Activated CD4-positive, alpha-beta T cell treated with anti-CD3 and anti-CD28 coated beads for 36 hours (primary cell): ENCODE measurements at regions of chr16 and their contacts with region 1.

Region 1: DNA sequence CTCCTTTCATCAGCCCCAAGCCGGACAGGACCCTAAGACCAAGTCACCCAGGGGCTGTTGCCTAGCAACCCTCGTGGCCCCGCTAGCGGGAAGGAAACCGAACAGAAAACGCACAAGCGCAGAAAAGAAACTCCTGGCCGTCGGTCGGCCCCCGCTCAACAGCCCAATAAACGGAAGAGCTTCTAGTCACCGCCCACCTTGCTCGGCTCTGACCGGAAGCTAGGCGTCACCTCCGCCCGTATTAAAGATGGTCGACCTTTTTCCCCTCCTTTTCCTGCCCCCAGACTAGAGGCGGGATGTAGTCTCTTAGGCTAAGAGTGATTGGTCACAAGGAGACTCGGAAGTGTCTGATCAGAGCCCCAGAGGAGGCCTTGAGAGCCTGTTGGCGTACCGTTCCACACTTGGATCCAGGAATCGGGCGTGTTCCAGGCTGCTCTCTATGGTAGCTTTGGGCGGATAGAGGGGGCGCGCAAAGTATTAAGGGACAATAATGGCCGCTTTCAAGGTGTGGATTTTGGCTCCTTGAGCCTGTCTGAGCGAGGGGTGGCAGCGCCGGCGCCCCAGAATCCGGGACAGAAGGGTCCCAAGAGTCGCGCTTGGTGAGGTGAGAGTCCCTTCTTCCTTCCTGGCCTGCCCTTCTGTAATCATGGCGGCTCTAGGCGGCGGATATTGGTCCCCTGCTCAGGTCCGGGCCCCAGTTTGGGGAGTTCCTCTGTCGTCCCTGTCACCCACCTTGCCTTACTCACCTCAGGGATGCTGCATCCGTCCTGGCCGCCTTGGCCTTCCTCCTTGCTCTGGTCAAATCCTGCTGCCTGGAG is at the starts of genes DHX38 and TXNL4B:
- DNase-seq: peak; percentile 95
- ATAC-seq: peak; percentile 98
- H3K4me3 Mint-ChIP-seq: peak within 1 kb of the TSS; percentile 96
- H3K27ac Mint-ChIP-seq: peak within 1 kb of the TSS; percentile 92
- H3K4me1 Mint-ChIP-seq: peaks cover 41% of the 10 kb centered on the region
- H3K27me3 Mint-ChIP-seq: no peaks in the 10 kb centered on the region
- total RNA-seq, gene DHX38: 55.9 to 79.0 TPM
- total RNA-seq, gene TXNL4B: 17.6 to 24.6 TPM

Region 2: GRCh38 chr16:71461686-71462648 is 631.7 kb before region 1 on chr16 and contains the start of gene ZNF23:
- CTCF ChIA-PET with region 1: interaction called, 3 read pairs
- POLR2A ChIA-PET with region 1: no interaction called
- intact Hi-C with region 1: loop called in 1 of 2 experiments (anchors 5 kb)
- DNase-seq: peak; percentile 88
- ATAC-seq: peak; percentile 96
- H3K4me3 Mint-ChIP-seq: peak within 1 kb of the TSS; percentile 76
- H3K27ac Mint-ChIP-seq: peak within 1 kb of the TSS; percentile 96
- H3K4me1 Mint-ChIP-seq: peaks cover 19% of the 10 kb centered on the region
- H3K27me3 Mint-ChIP-seq: no peaks in the 10 kb centered on the region
- total RNA-seq, gene ZNF23: 9.6 to 10.9 TPM

Region 3: DNA sequence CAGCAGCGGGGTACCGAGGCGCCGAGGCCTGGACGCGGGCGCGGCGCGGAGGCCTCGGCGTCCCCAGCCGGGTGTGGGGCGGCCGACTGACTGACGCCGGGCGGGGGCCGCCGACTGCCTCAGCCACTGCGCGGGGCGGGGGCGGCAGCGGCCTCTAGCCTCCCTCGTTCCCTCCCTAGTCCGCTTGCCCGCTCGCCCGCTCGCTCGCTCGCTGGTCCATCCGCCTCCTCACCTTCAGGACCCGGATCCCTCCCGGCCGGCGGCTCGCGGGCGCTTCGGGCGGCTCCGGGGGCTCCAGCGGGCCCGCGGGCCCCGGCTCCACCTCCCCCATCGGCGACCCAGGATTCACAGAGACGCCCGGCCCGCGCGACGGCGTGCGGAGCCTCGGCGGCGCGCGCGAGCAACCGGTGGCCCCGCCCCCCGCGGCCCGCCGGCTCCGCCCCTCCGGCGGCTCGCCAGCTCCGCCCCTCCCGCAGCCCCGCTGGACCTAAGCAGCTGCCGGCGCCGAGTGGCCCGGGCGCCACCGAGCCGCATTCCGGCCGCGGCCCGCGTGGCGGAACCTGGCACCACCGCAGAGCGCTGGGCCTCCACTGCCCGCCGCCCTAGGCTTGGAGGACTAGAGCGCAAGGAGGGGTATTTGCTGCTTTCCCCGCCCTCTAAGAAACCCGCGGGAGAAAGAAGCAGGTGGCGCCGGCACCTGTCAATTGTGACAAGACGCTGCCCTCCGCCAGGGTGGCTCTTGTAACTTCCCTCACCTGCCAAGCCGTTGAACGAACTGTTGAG is 369.9 kb before region 1 on chr16:
- CTCF ChIA-PET with region 1: interaction called, 3 read pairs
- POLR2A ChIA-PET with region 1: no interaction called
- intact Hi-C with region 1: loop called in 1 of 2 experiments (anchors 1 kb)
- DNase-seq: peak; percentile 87
- ATAC-seq: peak; percentile 87
- H3K4me3 Mint-ChIP-seq: peak overlapping the region; percentile 95
- H3K27ac Mint-ChIP-seq: peak overlapping the region; percentile 68
- H3K4me1 Mint-ChIP-seq: peaks cover 16% of the 10 kb centered on the region
- H3K27me3 Mint-ChIP-seq: no peaks in the 10 kb centered on the region

Region 4: GRCh38 chr16:71883849-71884638 is 209.6 kb before region 1 on chr16 and contains the start of gene ZNF821:
- CTCF ChIA-PET with region 1: interaction called, 3 read pairs
- POLR2A ChIA-PET with region 1: interaction called, 3 read pairs
- intact Hi-C with region 1: loop called in 1 of 2 experiments (anchors 1 kb)
- DNase-seq: peak; percentile 89
- ATAC-seq: peak; percentile 66
- H3K4me3 Mint-ChIP-seq: peak within 1 kb of the TSS; percentile 84
- H3K27ac Mint-ChIP-seq: peak within 1 kb of the TSS; percentile 84
- H3K4me1 Mint-ChIP-seq: peaks cover 48% of the 10 kb centered on the region
- H3K27me3 Mint-ChIP-seq: no peaks in the 10 kb centered on the region
- total RNA-seq, gene ZNF821: 6.0 to 7.7 TPM

Region 5: DNA sequence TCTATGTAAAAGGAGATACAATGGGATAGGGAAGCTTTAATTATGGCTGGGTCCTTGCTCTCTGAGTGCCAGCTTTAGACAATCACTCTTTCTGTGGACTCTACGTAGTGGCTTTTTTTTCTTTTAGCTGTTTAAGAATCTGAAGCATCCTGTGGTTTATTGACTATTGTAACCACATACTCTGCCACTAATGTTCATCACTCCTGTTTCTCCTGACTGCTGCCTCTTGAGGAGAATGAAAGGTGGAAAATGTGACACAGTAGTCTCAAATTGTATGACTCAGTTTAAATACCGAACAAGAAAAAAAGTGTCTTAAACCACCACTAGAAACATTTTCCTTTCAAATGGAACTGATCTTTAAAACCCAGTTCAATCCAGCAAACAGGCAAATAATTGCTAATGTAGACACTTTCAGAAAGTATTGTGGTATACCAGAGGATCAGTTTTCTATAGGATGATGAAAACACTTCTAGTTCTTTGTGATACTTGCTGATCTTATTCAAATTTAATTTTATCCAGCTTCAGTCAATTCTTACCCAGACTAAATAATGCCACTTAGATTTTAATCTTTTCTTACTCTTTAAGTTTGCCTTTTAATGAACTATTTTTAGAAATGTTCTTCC is 381.0 kb after region 1 on chr16:
- CTCF ChIA-PET with region 1: no interaction called
- POLR2A ChIA-PET with region 1: no interaction called
- intact Hi-C with region 1: loop called in 1 of 2 experiments (anchors 1 kb)
- DNase-seq: no peak
- ATAC-seq: peak; percentile 96
- H3K4me3 Mint-ChIP-seq: no peak overlapping the region
- H3K27ac Mint-ChIP-seq: no peak overlapping the region
- H3K4me1 Mint-ChIP-seq: peaks cover 16% of the 10 kb centered on the region
- H3K27me3 Mint-ChIP-seq: no peaks in the 10 kb centered on the region